ENCODE measurements at regions of chr18 and their contacts with region 1.

Region 1: GRCh38 chr18:2325308-2325849 is 245.9 kb downstream of the METTL4 start:
- DNase-seq: no peak
- ATAC-seq: no peak
- H3K4me3 ChIP-seq: no peak overlapping the region
- H3K27ac ChIP-seq: no peak overlapping the region
- H3K4me1 ChIP-seq: peaks cover 0 to 2% (median 0%) of the 10 kb centered on the region in 9 donors
- H3K27me3 ChIP-seq: peaks cover 0 to 17% (median 4%) of the 10 kb centered on the region in 7 donors
- CTCF ChIP-seq: no peak

Region 2: GRCh38 chr18:2240311-2240705 is 85.1 kb before region 1 on chr18:
- intact Hi-C with region 1: no loop called
- DNase-seq: no peak
- ATAC-seq: no peak
- H3K4me3 ChIP-seq: no peak overlapping the region
- H3K27ac ChIP-seq: no peak overlapping the region
- H3K4me1 ChIP-seq: no peaks in the 10 kb centered on the region
- H3K27me3 ChIP-seq: peaks cover 0 to 30% (median 14%) of the 10 kb centered on the region in 7 donors
- CTCF ChIP-seq: no peak

Region 3: DNA sequence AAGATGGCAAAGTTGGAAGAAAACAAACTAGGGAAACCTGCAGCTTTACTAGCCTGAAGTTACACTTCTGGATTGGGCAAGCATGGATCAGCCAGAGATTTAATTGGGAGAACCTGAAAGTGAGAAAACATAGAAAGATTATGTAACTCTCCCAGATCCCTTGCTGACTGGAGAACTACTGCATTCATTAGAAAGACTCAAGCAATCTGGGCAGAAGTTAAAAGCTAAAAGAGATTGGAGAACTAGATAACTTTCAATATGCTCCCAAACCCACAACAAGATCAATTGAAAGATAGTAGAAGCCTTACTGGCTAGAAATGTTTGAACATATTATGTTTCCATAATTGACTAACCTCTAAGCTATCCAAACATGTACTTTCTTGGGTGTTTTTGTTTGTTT is 60.0 kb after region 1 on chr18:
- intact Hi-C with region 1: loop called in 1 of 10 experiments (anchors 10 kb)
- DNase-seq: no peak
- ATAC-seq: no peak
- H3K4me3 ChIP-seq: no peak overlapping the region
- H3K27ac ChIP-seq: no peak overlapping the region
- H3K4me1 ChIP-seq: no peaks in the 10 kb centered on the region
- H3K27me3 ChIP-seq: no peaks in the 10 kb centered on the region
- CTCF ChIP-seq: no peak

Region 4: DNA sequence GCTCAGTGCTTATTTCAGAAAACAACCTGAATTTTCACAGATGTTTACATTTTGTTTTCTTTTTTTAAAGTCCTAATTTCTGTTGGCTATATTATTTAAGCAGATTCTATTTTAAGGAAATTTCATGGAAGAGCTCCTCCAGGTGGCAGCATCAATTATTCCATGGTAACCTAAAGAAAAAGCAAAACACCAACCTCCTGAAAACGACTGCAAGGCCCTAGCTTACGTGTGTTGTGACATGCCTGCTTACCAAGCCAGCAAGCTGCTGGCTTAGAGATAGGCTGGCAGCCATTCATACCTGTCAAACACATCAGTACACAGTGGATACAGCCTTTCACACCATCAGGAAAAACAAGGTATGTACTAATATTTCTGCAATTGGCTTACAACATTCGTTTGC is 622.7 kb after region 1 on chr18:
- intact Hi-C with region 1: no loop called
- DNase-seq: no peak
- ATAC-seq: peak in 7 of 8 donors; percentile 33 to 95 (median 81)
- H3K4me3 ChIP-seq: no peak overlapping the region
- H3K27ac ChIP-seq: peak overlapping the region in 2 of 10 donors; percentile 5 to 12
- H3K4me1 ChIP-seq: peaks cover 0 to 8% (median 3%) of the 10 kb centered on the region in 9 donors
- H3K27me3 ChIP-seq: no peaks in the 10 kb centered on the region
- CTCF ChIP-seq: peak in 6 of 9 donors; percentile 27 to 50 (median 42)

Measured in heart right ventricle (tissue), 16 donors.